ENCODE measurements at regions of chr19 and their contacts with region 1.

Region 1: GRCh38 chr19:58326914-58327726 is at the start of gene ZSCAN22:
- DNase-seq: peak; percentile 96
- ATAC-seq: peak; percentile 91
- H3K4me3 Mint-ChIP-seq: no peak within 1 kb of the TSS
- H3K27ac Mint-ChIP-seq: no peak within 1 kb of the TSS
- H3K4me1 Mint-ChIP-seq: peaks cover 4% of the 10 kb centered on the region
- H3K27me3 Mint-ChIP-seq: no peaks in the 10 kb centered on the region
- total RNA-seq, gene ZSCAN22: 3.1 to 3.8 TPM

Region 2: GRCh38 chr19:58362272-58362994 is 35.3 kb after region 1 on chr19 and contains the start of gene ZNF497:
- CTCF ChIA-PET with region 1: no interaction called
- POLR2A ChIA-PET with region 1: no interaction called
- intact Hi-C with region 1: loop called (anchors 1 to 2 kb)
- DNase-seq: peak; percentile 99
- ATAC-seq: peak; percentile 94
- H3K4me3 Mint-ChIP-seq: peak within 1 kb of the TSS; percentile 86
- H3K27ac Mint-ChIP-seq: peak within 1 kb of the TSS; percentile 93
- H3K4me1 Mint-ChIP-seq: peaks cover 7% of the 10 kb centered on the region
- H3K27me3 Mint-ChIP-seq: no peaks in the 10 kb centered on the region
- total RNA-seq, gene ZNF497: 1.1 to 1.5 TPM

Region 3: GRCh38 chr19:58400916-58401839 is 74.1 kb after region 1 on chr19:
- CTCF ChIA-PET with region 1: no interaction called
- POLR2A ChIA-PET with region 1: no interaction called
- intact Hi-C with region 1: loop called in 1 of 2 experiments (anchors 1 kb)
- DNase-seq: peak; percentile 100
- ATAC-seq: peak; percentile 97
- H3K4me3 Mint-ChIP-seq: peak overlapping the region; percentile 82
- H3K27ac Mint-ChIP-seq: peak overlapping the region; percentile 61
- H3K4me1 Mint-ChIP-seq: peaks cover 14% of the 10 kb centered on the region
- H3K27me3 Mint-ChIP-seq: peaks cover 2% of the 10 kb centered on the region

Region 4: GRCh38 chr19:58451358-58452101 is 124.4 kb after region 1 on chr19 and contains the start of gene ZNF324B:
- CTCF ChIA-PET with region 1: no interaction called
- POLR2A ChIA-PET with region 1: no interaction called
- intact Hi-C with region 1: loop called in 1 of 2 experiments (anchors 1 kb)
- DNase-seq: peak; percentile 98
- ATAC-seq: peak; percentile 99
- H3K4me3 Mint-ChIP-seq: peak within 1 kb of the TSS; percentile 77
- H3K27ac Mint-ChIP-seq: peak within 1 kb of the TSS; percentile 55
- H3K4me1 Mint-ChIP-seq: peaks cover 25% of the 10 kb centered on the region
- H3K27me3 Mint-ChIP-seq: peaks cover 15% of the 10 kb centered on the region
- total RNA-seq, gene ZNF324B: 5.8 to 7.5 TPM

Region 5: DNA sequence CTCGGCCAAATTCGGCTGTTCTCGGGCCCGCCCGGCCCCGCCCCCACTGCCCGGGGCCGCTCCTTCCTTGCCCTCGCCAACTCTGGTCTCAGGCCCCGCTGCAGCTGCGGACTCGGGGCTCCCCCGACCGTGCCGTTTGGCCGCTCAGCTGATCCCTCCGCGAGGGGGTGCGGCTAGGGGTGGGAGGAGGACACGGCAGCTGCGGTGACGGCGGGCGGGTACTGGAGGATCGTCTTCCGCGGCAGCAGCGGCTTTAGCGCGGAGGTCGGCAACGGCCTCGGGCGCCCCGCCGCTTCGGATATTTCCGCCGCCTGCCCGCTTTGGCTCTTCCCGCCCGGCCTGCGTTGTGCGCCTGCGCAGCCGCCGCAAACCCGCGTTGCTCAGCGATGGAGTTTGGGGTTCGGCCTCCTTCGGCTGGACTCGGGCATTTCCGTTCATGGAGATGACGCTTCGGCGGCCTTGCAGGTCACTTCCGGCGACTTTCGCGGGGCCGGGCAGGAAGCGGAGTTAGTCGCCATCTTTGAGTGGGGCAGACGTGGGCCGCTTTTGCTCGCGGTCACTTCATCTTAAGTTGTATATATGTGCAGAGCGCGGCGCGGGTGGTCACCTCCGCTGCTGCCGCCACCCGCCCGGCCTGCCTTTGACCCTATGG is 231.6 kb after region 1 on chr19:
- CTCF ChIA-PET with region 1: no interaction called
- POLR2A ChIA-PET with region 1: no interaction called
- intact Hi-C with region 1: loop called in 1 of 2 experiments (anchors 1 kb)
- DNase-seq: peak; percentile 100
- ATAC-seq: peak; percentile 69
- H3K4me3 Mint-ChIP-seq: peak overlapping the region; percentile 92
- H3K27ac Mint-ChIP-seq: peak overlapping the region; percentile 100
- H3K4me1 Mint-ChIP-seq: peaks cover 65% of the 10 kb centered on the region
- H3K27me3 Mint-ChIP-seq: no peaks in the 10 kb centered on the region